ENCODE measurements at regions of chr4 and their contacts with region 1.

Region 1: DNA sequence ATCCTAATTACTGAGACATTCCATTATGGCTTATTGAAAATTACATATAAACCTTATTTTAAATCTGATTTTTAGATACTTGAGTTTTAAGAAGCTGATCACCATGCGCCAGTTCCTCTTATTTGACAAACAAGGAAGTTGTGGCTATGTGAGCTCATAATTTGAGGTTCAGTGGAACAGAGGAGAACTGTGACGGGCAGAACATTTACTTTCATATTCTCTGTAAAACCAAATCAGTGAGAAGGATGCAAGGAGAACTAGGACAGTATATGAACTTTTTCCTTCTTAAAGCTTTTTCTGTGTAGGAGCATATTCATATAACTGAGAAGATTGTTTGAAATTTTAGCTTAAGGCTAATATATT is 25.3 kb downstream of the STIM2 start:
- DNase-seq: peak in 24 of 35 experiments; percentile 7 to 83 (median 38)
- ATAC-seq: peak; percentile 66 to 78 (median 74)
- H3K4me3 ChIP-seq: peak overlapping the region; percentile 15 to 32
- H3K4me3 Mint-ChIP-seq: peak overlapping the region; percentile 69 to 77 (median 75)
- H3K27ac ChIP-seq: peak overlapping the region; percentile 97
- H3K27ac Mint-ChIP-seq: peak overlapping the region; percentile 95 to 98
- H3K4me1 ChIP-seq: peaks cover 21 to 51% of the 10 kb centered on the region in 2 experiments
- H3K4me1 Mint-ChIP-seq: peaks cover 83 to 86% (median 84%) of the 10 kb centered on the region in 3 donors
- H3K27me3 ChIP-seq: no peaks in the 10 kb centered on the region
- H3K27me3 Mint-ChIP-seq: no peaks in the 10 kb centered on the region

Region 2: DNA sequence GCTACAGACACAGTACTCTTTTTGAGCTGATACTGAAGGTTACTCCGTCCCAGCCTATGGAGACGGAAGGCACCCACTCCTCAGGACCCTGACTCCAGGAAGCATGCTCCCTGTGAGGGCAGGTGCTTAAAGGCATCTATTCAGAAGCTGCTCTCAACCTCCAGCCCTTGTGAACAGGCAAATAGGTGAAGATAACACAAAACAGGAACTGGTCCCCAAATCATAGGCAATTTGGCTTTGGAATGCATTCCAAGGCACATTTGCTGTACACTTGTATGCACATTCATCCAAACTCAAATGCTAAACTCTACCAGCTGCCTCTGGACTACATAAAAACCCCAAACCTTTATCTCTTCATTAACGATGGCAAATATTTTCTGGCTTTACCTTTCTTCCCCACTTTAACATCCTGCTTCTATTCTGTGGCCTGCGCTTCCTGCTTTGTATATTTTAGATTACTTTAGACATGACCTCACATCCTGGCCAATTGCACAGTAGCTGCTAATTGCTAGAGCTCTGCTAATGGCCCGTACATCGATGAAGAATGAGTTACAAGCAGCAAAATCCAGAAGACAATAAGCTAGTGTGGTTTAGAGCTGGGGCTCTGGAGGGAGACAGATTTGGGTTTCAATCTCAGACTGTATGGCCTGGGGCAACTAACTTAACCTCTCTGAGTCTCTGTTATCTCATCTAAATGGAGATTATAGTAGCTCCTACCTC is 1026.3 kb before region 1 on chr4:
- CTCF ChIA-PET with region 1: interaction called in 1 of 2 experiments, 5 read pairs
- POLR2A ChIA-PET with region 1: interaction called in 1 of 2 experiments, 14 read pairs
- DNase-seq: peak in 30 of 35 experiments; percentile 5 to 73 (median 36)
- ATAC-seq: peak; percentile 69 to 75 (median 74)
- H3K4me3 ChIP-seq: peak overlapping the region in 1 of 2 donors; percentile 13
- H3K4me3 Mint-ChIP-seq: peak overlapping the region; percentile 17 to 100 (median 99)
- H3K27ac ChIP-seq: peak overlapping the region; percentile 88
- H3K27ac Mint-ChIP-seq: peak overlapping the region; percentile 91 to 98
- H3K4me1 ChIP-seq: peaks cover 21 to 62% of the 10 kb centered on the region in 2 experiments
- H3K4me1 Mint-ChIP-seq: peaks cover 62 to 77% (median 74%) of the 10 kb centered on the region in 3 donors
- H3K27me3 ChIP-seq: no peaks in the 10 kb centered on the region
- H3K27me3 Mint-ChIP-seq: no peaks in the 10 kb centered on the region

Region 3: DNA sequence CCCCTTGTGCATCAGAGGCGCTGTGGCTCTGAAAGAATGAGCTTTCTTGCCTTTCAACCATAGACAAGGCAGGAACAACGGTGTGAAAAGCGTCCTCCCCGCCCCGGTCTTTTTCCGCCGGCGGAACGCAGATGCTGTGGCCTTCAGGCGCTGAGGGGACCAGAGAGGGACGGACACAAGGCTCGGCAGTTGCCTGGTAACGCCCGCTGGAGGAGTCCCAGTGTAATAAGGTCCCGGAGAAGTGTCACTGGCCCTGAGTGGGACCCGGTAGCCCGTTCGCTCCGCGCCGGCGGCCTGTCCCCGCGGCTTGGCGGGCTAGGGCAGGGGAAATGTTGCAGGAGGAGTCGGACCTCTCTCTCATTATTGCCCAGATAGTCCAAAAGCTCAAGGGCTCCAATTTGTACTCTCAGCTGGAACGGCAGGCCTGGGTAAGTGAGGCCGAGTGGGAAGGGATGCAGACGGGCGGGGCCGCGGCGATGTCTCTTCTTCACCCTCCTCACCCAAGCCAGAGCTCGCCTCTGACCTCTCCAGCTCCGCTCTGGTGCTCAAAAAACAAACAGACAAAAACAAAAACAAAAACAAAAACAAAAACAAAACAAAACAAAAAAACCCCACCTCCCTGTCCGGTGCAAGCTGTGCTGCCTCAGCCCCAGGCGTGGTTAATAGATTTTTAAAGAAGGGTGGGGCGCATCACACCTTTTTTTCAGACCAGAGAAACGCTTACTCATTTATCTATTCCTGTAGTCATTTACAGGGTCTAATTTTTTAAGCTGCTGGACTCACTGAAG is 301.8 kb before region 1 on chr4 and contains the start of gene TBC1D19:
- CTCF ChIA-PET with region 1: interaction called, 3 to 18 read pairs
- POLR2A ChIA-PET with region 1: interaction called in 1 of 2 experiments, 12 read pairs
- DNase-seq: peak; percentile 73 to 91 (median 82)
- ATAC-seq: peak; percentile 88 to 95 (median 94)
- H3K4me3 ChIP-seq: peak within 1 kb of the TSS; percentile 91 to 98
- H3K4me3 Mint-ChIP-seq: peak within 1 kb of the TSS; percentile 95 to 96 (median 96)
- H3K27ac ChIP-seq: peak within 1 kb of the TSS; percentile 94
- H3K27ac Mint-ChIP-seq: peak within 1 kb of the TSS; percentile 94 to 98
- H3K4me1 ChIP-seq: peaks cover 9 to 12% of the 10 kb centered on the region in 2 experiments
- H3K4me1 Mint-ChIP-seq: peaks cover 33 to 42% (median 34%) of the 10 kb centered on the region in 3 donors
- H3K27me3 ChIP-seq: no peaks in the 10 kb centered on the region
- H3K27me3 Mint-ChIP-seq: peaks cover 0 to 7% of the 10 kb centered on the region in 2 donors
- total RNA-seq, gene TBC1D19: 6.8 to 11.6 (median 9.4) TPM

Region 4: GRCh38 chr4:26701786-26702227 is 184.1 kb before region 1 on chr4:
- CTCF ChIA-PET with region 1: no interaction called
- POLR2A ChIA-PET with region 1: no interaction called
- DNase-seq: no peak
- ATAC-seq: no peak
- H3K4me3 ChIP-seq: no peak overlapping the region
- H3K4me3 Mint-ChIP-seq: no peak overlapping the region
- H3K27ac ChIP-seq: no peak overlapping the region
- H3K27ac Mint-ChIP-seq: no peak overlapping the region
- H3K4me1 ChIP-seq: no peaks in the 10 kb centered on the region
- H3K4me1 Mint-ChIP-seq: no peaks in the 10 kb centered on the region
- H3K27me3 ChIP-seq: no peaks in the 10 kb centered on the region
- H3K27me3 Mint-ChIP-seq: no peaks in the 10 kb centered on the region

Region 5: DNA sequence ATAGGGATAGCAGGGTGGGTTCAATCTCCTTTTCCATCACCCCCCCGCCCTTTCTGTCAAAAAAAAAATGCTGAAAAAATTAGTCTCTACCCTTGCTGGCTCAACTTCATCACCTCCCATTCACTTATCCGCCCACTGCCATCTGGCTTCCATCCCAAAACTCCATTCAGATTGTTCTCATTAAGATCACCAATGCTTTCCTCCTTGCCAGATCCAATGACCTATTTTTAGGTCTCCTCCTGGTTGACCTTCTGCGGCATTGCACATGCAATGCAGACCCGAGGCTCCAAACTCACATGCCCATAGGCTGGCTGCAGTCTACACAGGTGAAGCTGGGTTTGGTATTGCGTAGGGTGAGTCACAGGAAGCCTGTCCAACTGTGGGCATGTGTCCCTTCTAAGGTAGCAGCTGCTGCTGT is 46.4 kb before region 1 on chr4:
- CTCF ChIA-PET with region 1: no interaction called
- POLR2A ChIA-PET with region 1: no interaction called
- DNase-seq: no peak
- ATAC-seq: no peak
- H3K4me3 ChIP-seq: no peak overlapping the region
- H3K4me3 Mint-ChIP-seq: no peak overlapping the region
- H3K27ac ChIP-seq: no peak overlapping the region
- H3K27ac Mint-ChIP-seq: no peak overlapping the region
- H3K4me1 ChIP-seq: peaks cover 0 to 3% of the 10 kb centered on the region in 2 experiments
- H3K4me1 Mint-ChIP-seq: peaks cover 9 to 16% (median 12%) of the 10 kb centered on the region in 3 donors
- H3K27me3 ChIP-seq: peaks cover 0 to 3% of the 10 kb centered on the region in 2 experiments
- H3K27me3 Mint-ChIP-seq: no peaks in the 10 kb centered on the region

Region 6: DNA sequence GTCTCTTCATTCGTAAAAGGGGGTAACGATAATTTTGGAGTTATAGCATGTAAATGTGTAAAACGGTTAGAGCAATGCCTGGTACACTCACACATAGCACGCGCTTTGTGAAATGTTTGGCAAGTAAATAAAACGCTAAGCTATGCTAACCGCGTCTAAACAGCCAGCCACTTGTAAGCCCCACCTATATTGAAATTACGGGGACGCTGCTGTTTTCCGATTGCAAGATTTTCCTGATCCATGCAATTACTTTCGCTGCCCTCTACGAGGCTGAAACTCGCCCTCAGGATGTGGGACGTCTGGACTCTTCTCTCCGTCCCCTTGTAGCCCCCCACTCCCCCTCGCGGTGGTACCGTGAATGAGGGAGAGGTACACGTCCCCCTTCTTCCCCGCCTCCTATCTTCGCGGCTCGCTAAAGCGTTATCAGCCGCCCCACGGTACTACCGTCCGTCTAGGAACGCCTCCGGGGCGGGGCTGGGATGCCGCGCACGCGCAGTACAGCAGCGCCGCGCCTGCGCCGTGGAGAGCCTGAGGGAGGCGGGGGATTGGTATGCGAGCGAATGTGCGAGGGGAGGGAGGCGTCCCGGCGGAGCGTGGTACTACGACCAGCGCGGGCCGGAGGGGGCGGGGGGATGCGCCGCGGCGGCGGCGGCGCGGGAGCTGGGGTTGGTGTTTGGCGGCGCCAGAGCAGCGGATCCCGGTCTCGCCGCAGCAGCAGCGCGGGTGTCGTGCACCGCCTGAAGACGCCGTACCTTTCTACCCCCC is 25.6 kb before region 1 on chr4 and contains the start of gene STIM2:
- CTCF ChIA-PET with region 1: interaction called, 20 to 40 read pairs
- POLR2A ChIA-PET with region 1: interaction called, 9 to 127 read pairs
- DNase-seq: peak; percentile 90 to 100 (median 96)
- ATAC-seq: peak; percentile 64 to 77 (median 71)
- H3K4me3 ChIP-seq: peak within 1 kb of the TSS; percentile 84 to 94
- H3K4me3 Mint-ChIP-seq: peak within 1 kb of the TSS; percentile 98 to 100 (median 100)
- H3K27ac ChIP-seq: peak within 1 kb of the TSS; percentile 73
- H3K27ac Mint-ChIP-seq: peak within 1 kb of the TSS; percentile 97 to 99
- H3K4me1 ChIP-seq: peaks cover 32 to 45% of the 10 kb centered on the region in 2 experiments
- H3K4me1 Mint-ChIP-seq: peaks cover 54 to 77% (median 64%) of the 10 kb centered on the region in 3 donors
- H3K27me3 ChIP-seq: no peaks in the 10 kb centered on the region
- H3K27me3 Mint-ChIP-seq: no peaks in the 10 kb centered on the region
- total RNA-seq, gene STIM2: 67.9 to 98.7 (median 75.2) TPM

Region 7: GRCh38 chr4:26873391-26874026 is 12.4 kb before region 1 on chr4:
- CTCF ChIA-PET with region 1: interaction called, 11 to 40 read pairs
- POLR2A ChIA-PET with region 1: interaction called, 6 to 76 read pairs
- DNase-seq: peak; percentile 15 to 87 (median 68)
- ATAC-seq: peak; percentile 81 to 92 (median 89)
- H3K4me3 ChIP-seq: no peak overlapping the region
- H3K4me3 Mint-ChIP-seq: peak overlapping the region; percentile 28 to 74 (median 42)
- H3K27ac ChIP-seq: peak overlapping the region; percentile 88
- H3K27ac Mint-ChIP-seq: peak overlapping the region; percentile 86 to 94
- H3K4me1 ChIP-seq: peaks cover 29 to 32% of the 10 kb centered on the region in 2 experiments
- H3K4me1 Mint-ChIP-seq: peaks cover 84 to 89% (median 89%) of the 10 kb centered on the region in 3 donors
- H3K27me3 ChIP-seq: no peaks in the 10 kb centered on the region
- H3K27me3 Mint-ChIP-seq: no peaks in the 10 kb centered on the region

Region 8: DNA sequence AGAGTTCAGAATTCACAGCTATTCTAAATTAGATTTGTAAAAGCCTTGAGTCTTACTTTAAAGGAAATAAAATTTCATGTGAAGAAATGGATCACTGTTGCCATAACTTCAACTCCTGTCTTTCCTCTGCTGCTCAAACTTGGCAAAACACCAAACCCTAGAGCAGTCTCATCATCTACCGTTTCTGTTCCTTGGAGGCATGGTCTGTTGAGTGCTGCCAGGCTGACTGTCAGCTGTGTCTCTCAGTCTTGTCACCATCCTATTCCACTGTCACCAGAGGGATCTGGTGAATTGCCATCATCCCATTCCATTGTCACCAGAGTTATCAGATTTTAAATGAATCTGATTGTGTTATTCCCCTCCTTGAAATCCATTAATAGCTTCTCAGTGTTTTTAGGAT is 30.3 kb after region 1 on chr4:
- CTCF ChIA-PET with region 1: interaction called, 3 to 9 read pairs
- POLR2A ChIA-PET with region 1: interaction called, 4 to 10 read pairs
- DNase-seq: peak in 3 of 35 experiments; percentile 7 to 30 (median 7)
- ATAC-seq: peak in 3 of 4 experiments; percentile 32 to 54 (median 33)
- H3K4me3 ChIP-seq: no peak overlapping the region
- H3K4me3 Mint-ChIP-seq: peak overlapping the region in 1 of 3 donors; percentile 4
- H3K27ac ChIP-seq: no peak overlapping the region
- H3K27ac Mint-ChIP-seq: peak overlapping the region; percentile 7 to 45
- H3K4me1 ChIP-seq: peaks cover 7 to 26% of the 10 kb centered on the region in 2 experiments
- H3K4me1 Mint-ChIP-seq: peaks cover 65 to 79% (median 78%) of the 10 kb centered on the region in 3 donors
- H3K27me3 ChIP-seq: no peaks in the 10 kb centered on the region
- H3K27me3 Mint-ChIP-seq: no peaks in the 10 kb centered on the region

Region 9: DNA sequence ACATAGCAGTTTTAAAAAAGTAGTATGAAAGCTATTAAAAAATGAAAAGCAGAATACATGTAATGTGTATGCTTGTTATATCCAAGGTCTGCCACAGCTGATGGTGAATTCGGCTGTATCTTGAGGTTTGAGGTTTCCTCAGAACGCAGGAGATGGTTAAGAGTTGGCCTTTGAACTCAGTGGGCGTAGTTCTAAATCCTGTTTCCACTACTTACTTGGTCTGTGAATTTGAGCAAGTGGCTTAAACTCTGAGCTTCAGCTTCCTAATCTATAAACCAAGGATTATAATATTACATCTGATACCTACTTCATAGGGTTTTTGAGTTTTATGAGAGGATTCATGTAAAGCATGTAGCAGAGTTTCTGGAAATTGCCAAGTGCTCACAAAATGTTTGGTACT is 100.0 kb after region 1 on chr4:
- CTCF ChIA-PET with region 1: no interaction called
- POLR2A ChIA-PET with region 1: interaction called, 3 to 10 read pairs
- DNase-seq: peak in 28 of 35 experiments; percentile 10 to 71 (median 28)
- ATAC-seq: peak; percentile 66 to 100 (median 98)
- H3K4me3 ChIP-seq: no peak overlapping the region
- H3K4me3 Mint-ChIP-seq: peak overlapping the region; percentile 6 to 46 (median 21)
- H3K27ac ChIP-seq: no peak overlapping the region
- H3K27ac Mint-ChIP-seq: peak overlapping the region; percentile 46 to 55
- H3K4me1 ChIP-seq: peaks cover 6 to 25% of the 10 kb centered on the region in 2 experiments
- H3K4me1 Mint-ChIP-seq: peaks cover 64 to 70% (median 65%) of the 10 kb centered on the region in 3 donors
- H3K27me3 ChIP-seq: no peaks in the 10 kb centered on the region
- H3K27me3 Mint-ChIP-seq: no peaks in the 10 kb centered on the region